ENCODE measurements at regions of chr4 and their contacts with region 1.

Region 1: DNA sequence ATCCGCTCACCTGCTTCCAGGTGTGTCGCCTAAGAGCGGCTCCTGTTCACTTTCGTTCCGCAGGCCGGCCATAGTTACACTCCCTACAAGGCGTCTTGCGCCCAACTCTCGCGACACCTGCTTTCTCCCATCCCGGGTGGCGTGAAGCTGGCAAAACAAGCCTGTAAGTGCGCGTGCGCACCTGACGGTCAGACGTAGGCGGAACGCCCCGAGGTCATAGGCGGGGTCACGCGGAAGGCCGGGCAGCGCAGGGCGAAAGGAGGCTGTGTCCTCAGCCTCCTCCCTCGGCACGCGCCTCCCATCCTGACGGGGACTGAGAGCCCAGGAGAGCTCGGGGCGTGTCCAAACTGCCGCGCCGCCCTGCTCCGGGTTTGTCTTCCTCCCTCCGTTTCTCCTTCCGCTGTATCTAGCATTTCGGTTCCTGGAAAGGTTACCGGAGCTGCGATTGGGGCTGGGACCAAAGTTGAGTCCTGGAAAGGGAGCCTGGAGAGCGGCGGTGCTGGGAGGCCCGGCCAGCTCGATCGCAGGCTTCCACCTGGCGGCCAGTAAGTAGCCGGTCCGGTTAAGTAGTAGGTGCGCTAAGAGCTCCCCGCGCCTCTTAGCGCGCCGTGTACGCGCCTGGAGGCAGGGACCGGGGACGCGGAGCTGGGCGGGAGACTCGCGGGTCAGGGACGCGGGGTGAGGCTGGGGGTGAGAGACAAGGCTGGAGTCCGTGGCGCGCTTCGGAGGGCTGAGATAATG is at the starts of genes ABHD18 and MFSD8:
- DNase-seq: peak; percentile 92 to 100 (median 98)
- ATAC-seq: peak; percentile 85 to 89
- H3K4me3 Mint-ChIP-seq: peak within 1 kb of the TSS; percentile 92 to 99 (median 96)
- H3K27ac Mint-ChIP-seq: peak within 1 kb of the TSS; percentile 92 to 99 (median 96)
- H3K4me1 Mint-ChIP-seq: peaks cover 15 to 53% (median 42%) of the 10 kb centered on the region in 4 donors
- H3K27me3 Mint-ChIP-seq: no peaks in the 10 kb centered on the region
- polyA plus RNA-seq, gene ABHD18: 6.8 to 14.6 (median 9.0) TPM
- polyA plus RNA-seq, gene MFSD8: 5.8 to 7.8 (median 7.6) TPM

Region 2: GRCh38 chr4:127856813-127857447 is 108.3 kb before region 1 on chr4:
- POLR2A ChIA-PET with region 1: no interaction called
- DNase-seq: no peak
- ATAC-seq: no peak
- H3K4me3 Mint-ChIP-seq: no peak overlapping the region
- H3K27ac Mint-ChIP-seq: no peak overlapping the region
- H3K4me1 Mint-ChIP-seq: peaks cover 0 to 9% (median 0%) of the 10 kb centered on the region in 4 donors
- H3K27me3 Mint-ChIP-seq: no peaks in the 10 kb centered on the region

Region 3: DNA sequence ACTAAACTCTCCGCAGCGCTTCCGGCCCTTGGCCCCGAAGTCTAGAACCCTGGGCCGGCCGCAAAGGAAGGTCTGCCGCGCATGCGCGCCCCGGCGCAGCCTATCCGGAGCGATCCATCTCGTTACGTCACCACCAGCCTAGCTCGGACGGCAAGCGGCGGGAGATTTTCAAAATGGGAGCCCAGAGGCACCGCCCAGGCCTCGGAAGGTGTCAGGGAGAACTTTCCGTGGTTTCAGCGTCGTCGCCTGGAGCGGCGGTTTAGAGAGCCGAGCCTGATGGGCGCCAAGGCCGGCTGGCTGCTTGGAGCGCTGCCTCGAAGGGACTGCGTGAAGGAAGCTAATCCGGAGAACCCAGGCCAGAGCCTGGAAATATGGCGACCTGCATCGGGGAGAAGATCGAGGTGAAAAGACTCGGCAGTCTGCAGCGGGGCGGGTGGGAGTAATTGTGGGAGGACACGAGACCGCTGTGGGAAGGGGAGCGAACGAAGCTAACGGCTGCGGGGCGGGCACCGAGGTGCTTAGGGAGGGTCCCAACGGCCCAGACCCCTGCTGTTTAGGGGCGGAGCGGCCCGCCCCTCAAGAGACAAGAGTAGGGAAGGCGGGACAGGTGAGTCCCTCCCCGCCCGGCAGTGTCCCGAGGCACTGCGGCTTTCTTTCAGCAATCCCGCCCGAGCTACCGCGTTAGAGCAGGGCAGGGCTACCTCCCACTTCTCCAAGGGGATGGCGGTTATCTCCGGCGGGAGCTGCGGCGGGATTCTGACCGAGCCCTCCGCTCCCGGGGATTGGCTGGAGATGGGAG is 84.3 kb before region 1 on chr4 and contains the start of gene PLK4:
- POLR2A ChIA-PET with region 1: interaction called, 19 read pairs
- DNase-seq: peak; percentile 85 to 98 (median 94)
- ATAC-seq: peak; percentile 91 to 95
- H3K4me3 Mint-ChIP-seq: peak within 1 kb of the TSS; percentile 87 to 100 (median 98)
- H3K27ac Mint-ChIP-seq: peak within 1 kb of the TSS; percentile 92 to 99 (median 99)
- H3K4me1 Mint-ChIP-seq: peaks cover 6 to 31% (median 24%) of the 10 kb centered on the region in 4 donors
- H3K27me3 Mint-ChIP-seq: peaks cover 0 to 2% (median 0%) of the 10 kb centered on the region in 5 donors
- polyA plus RNA-seq, gene PLK4: 0.96 to 2.0 (median 1.1) TPM

Region 4: DNA sequence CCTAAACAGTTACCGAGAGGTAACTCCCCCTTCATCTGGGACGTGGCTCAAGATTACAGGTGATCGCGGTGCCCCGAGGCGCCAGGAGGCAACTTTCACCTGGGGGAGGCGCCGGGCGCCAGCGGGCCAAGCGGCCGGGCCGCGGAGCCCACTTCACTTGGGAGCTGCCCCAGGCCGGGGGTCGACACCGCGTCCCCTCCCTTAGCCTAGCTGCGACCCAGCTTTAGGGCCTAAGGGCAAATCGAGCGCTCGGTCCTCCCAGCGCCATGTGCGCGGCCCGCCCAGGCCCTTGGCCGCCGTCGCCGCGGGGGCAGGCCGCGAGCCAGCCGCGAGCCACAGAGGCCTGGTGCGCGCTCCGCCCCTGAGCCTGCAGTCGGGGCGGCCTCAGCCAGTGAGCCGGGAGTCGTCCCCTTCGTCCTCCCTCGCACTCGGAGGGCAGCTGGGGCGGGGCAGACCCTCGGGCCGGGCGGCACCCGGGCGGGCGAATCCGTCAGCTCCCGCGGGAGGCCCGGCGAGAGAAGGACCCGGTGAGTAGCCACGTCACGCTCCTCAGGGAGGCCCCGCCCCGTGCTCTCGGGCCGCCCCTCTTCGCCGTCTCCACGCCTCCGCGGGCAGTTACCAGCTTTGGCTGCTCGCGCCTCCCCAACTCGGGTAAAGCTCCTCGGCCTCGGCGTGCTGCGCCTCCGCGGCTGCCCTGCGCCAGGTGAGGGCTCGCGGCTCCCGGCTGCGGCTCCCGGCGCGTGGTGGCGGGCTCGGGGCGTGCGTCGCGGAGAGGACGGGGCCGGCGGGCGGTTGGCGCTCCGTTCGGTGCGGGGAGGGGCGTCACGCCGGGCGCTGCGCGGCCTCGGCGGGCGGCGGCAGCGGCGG is 95.7 kb after region 1 on chr4 and contains the start of gene LARP1B:
- POLR2A ChIA-PET with region 1: interaction called, 54 read pairs
- DNase-seq: peak; percentile 84 to 95 (median 90)
- ATAC-seq: peak; percentile 87 to 88
- H3K4me3 Mint-ChIP-seq: peak within 1 kb of the TSS; percentile 77 to 91 (median 87)
- H3K27ac Mint-ChIP-seq: peak within 1 kb of the TSS; percentile 59 to 94 (median 91)
- H3K4me1 Mint-ChIP-seq: peaks cover 5 to 20% (median 6%) of the 10 kb centered on the region in 4 donors
- H3K27me3 Mint-ChIP-seq: peaks cover 0 to 4% (median 0%) of the 10 kb centered on the region in 5 donors
- polyA plus RNA-seq, gene LARP1B: 2.9 to 4.0 (median 3.9) TPM

Region 5: DNA sequence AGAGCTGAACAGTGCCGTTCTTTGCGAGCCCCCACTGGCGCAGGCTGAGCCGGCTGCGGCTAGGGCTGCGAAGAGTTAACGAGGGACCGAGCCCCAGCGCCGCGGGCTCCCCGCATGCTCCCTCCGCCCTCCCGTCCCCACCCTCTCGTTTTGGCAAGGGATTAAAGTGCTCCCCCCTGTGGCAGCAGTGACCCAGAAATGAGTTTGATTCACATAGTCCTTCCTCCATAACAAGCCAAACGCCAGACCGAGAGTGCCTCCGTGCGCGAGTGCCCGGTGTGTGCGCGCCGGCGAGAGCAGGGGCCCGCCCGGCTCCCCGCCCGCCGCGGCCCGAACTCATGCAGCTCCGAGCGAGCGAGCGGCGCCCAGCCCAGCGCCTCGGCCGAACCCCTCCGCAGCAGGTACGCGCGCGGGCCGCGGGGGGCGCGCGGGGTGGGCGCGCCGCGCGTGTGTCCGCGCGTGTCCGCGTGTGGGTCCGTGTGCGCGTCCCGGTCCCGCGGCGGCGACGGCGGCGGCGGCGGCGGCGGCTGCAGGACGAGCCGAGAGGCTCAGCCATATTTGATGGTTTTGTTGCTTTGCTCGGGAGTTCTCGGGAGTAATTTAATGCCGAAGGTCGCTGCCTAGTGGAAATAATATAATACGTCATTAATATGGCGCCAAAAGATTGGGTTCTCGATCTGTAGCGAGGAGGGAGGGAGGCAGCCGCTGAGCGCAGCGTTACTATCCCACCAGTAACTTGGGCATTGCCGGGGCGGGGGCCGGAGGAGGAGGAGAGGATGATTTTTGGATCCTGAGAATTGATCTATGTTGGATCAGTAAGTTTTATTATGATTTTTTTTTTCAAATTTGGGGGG is 844.5 kb after region 1 on chr4 and contains the start of gene JADE1:
- POLR2A ChIA-PET with region 1: interaction called, 11 read pairs
- DNase-seq: peak; percentile 72 to 95 (median 88)
- ATAC-seq: peak; percentile 63 to 64
- H3K4me3 Mint-ChIP-seq: peak within 1 kb of the TSS; percentile 92 to 100 (median 98)
- H3K27ac Mint-ChIP-seq: peak within 1 kb of the TSS; percentile 94 to 100 (median 99)
- H3K4me1 Mint-ChIP-seq: peaks cover 8 to 24% (median 16%) of the 10 kb centered on the region in 4 donors
- H3K27me3 Mint-ChIP-seq: no peaks in the 10 kb centered on the region
- polyA plus RNA-seq, gene JADE1: 45.8 to 52.8 (median 47.8) TPM

Measured in naive thymus-derived CD8-positive, alpha-beta T cell (primary cell).